Activated CD8-positive, alpha-beta memory T cell treated with anti-CD3 and anti-CD28 coated beads, Interleukin-2, amount 10 ng/mL, durations not matched to agents 7 days and 5 days (primary cell): ENCODE measurements at regions of chr20 and their contacts with region 1.

Region 1: DNA sequence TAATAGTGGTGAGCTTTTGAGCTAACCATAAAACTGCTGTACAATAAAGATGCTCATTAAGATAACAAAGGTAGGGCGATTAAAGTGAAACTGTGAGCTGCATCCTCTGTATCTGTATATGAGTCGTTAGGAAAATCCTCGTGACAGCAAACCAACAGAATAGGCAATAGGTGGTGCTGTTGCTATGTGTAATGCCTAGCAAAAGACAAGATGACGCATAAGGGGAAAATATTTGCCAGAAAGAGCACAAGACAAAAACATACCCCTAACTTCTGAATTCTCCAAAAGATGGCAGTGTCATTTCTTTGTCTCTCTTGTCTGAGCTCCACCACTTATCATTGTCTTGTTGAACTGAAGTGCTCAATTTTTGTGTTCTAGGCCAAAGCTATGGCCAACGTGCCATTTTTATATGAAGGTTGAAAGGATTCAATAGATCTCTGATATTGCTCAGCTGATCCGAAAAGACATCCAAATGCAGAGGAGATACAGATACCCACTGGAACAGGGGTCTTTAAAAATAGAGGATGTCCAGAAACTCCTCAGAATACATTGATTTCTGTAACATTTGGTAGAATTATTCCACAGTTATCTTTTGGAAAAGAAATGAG is 56.3 kb upstream of the ANKEF1 start:
- DNase-seq: peak; percentile 60
- ATAC-seq: peak; percentile 92
- H3K4me3 Mint-ChIP-seq: no peak overlapping the region
- H3K27ac Mint-ChIP-seq: no peak overlapping the region
- H3K4me1 Mint-ChIP-seq: peaks cover 2% of the 10 kb centered on the region
- H3K27me3 Mint-ChIP-seq: peaks cover 12% of the 10 kb centered on the region

Region 2: DNA sequence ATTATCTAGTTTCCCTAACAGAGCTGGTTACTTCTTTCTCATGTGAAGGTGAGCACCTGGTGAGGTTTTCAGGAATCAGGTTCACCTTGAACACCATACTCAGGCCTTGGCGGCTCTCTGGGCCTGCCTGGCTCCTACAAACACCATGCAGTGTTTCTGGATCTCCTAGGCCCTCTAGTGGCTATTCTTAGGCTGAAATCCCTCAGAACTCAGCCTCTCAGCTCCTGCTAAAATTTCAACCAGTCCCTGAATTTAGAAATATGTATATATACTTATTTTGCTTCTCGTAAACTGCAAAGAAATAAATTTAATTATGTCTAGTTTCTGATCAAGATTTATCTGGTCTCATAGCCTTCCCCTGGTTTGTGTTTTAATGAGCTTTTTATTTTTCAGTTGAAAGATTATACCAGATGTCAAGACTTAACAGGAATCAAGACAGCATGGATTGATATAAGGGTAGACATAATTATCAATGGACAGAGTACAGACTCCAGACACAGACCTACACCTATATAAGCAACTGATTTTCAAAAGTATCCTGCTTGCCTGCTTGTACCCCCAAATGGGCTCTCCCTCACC is 112.2 kb after region 1 on chr20:
- CTCF ChIA-PET with region 1: interaction called, 46 read pairs
- DNase-seq: no peak
- ATAC-seq: peak; percentile 67
- H3K4me3 Mint-ChIP-seq: no peak overlapping the region
- H3K27ac Mint-ChIP-seq: no peak overlapping the region
- H3K4me1 Mint-ChIP-seq: no peaks in the 10 kb centered on the region
- H3K27me3 Mint-ChIP-seq: no peaks in the 10 kb centered on the region